Activated T-helper 1 cell treated with anti-CD3 and anti-CD28 coated beads, Interleukin-12 subunit alpha, Interleukin-12 subunit beta, Interleukin-2, Interleukin-4 antibody, amounts not matched to agents 30 ng/mL and 10 ng/mL and 1 ng/mL, durations not matched to agents 14 hours and 24 hours and 36 hours (primary cell): ENCODE measurements at regions of chr9 and their contacts with region 1.

Region 1: GRCh38 chr9:77177161-77177893 is at the start of gene VPS13A:
- DNase-seq: peak; percentile 88
- H3K4me3 Mint-ChIP-seq: peak within 1 kb of the TSS; percentile 95
- H3K27ac Mint-ChIP-seq: peak within 1 kb of the TSS; percentile 92
- H3K4me1 Mint-ChIP-seq: peaks cover 32% of the 10 kb centered on the region
- H3K27me3 Mint-ChIP-seq: peaks cover 13% of the 10 kb centered on the region
- total RNA-seq, gene VPS13A: 43.7 and 44.2 TPM in 2 replicates

Region 2: GRCh38 chr9:76458903-76459690 is 718.2 kb before region 1 on chr9 and contains the start of gene GCNT1:
- intact Hi-C with region 1: loop called (anchors 2 kb)
- DNase-seq: peak; percentile 92
- H3K4me3 Mint-ChIP-seq: peak within 1 kb of the TSS; percentile 87
- H3K27ac Mint-ChIP-seq: peak within 1 kb of the TSS; percentile 91
- H3K4me1 Mint-ChIP-seq: peaks cover 35% of the 10 kb centered on the region
- H3K27me3 Mint-ChIP-seq: peaks cover 3% of the 10 kb centered on the region
- total RNA-seq, gene GCNT1: 11.6 and 13.1 TPM in 2 replicates

Region 3: DNA sequence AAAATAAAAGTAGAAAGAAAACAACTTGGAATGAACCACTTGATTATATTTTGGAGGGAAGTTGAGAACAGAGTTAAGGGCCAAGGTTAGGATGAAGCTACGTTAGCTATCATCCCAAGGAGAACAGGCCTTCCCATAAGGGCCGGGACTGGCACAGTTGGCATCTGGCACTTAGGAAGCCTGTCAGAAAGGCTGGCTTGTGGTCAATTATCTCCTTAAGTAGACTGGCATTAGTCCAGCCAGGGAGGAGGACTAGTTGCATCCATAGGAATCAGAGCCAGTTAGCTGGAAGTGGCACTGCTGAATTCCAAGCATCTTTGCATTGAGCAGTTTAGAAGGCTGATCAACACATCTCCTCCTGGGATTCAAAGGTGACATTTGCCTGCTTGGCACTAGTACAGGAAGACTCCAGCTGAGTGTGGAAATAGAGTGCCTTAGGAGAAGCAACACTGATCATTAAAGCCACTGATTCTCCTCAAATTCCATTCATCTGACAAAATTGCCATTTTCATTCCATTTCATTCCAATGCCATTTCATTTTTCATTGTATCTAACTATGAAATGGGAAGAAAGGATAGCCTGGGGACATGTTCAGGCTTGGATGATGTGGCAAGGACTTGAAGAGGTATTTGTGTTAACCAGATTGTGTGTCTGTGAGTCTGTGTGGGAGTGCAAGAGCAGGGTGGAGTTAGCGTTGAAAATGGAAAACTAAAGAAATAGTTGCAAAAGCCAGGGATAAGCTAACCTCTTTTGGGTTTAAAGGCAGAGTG is 152.4 kb before region 1 on chr9:
- intact Hi-C with region 1: no loop called
- DNase-seq: no peak
- H3K4me3 Mint-ChIP-seq: no peak overlapping the region
- H3K27ac Mint-ChIP-seq: no peak overlapping the region
- H3K4me1 Mint-ChIP-seq: peaks cover 5% of the 10 kb centered on the region
- H3K27me3 Mint-ChIP-seq: peaks cover 37% of the 10 kb centered on the region

Region 4: GRCh38 chr9:77304543-77304942 is 127.2 kb after region 1 on chr9:
- intact Hi-C with region 1: loop called (anchors 10 kb)
- DNase-seq: no peak
- H3K4me3 Mint-ChIP-seq: no peak overlapping the region
- H3K27ac Mint-ChIP-seq: no peak overlapping the region
- H3K4me1 Mint-ChIP-seq: peaks cover 12% of the 10 kb centered on the region
- H3K27me3 Mint-ChIP-seq: no peaks in the 10 kb centered on the region

Region 5: GRCh38 chr9:77841739-77842386 is 664.5 kb after region 1 on chr9:
- intact Hi-C with region 1: loop called (anchors 10 kb)
- DNase-seq: no peak
- H3K4me3 Mint-ChIP-seq: no peak overlapping the region
- H3K27ac Mint-ChIP-seq: peak overlapping the region; percentile 45
- H3K4me1 Mint-ChIP-seq: peaks cover 27% of the 10 kb centered on the region
- H3K27me3 Mint-ChIP-seq: no peaks in the 10 kb centered on the region

Region 6: GRCh38 chr9:78296893-78297671 is 1119.8 kb after region 1 on chr9 and contains the start of gene PSAT1:
- intact Hi-C with region 1: loop called (anchors 1 kb)
- DNase-seq: peak; percentile 92
- H3K4me3 Mint-ChIP-seq: peak within 1 kb of the TSS; percentile 91
- H3K27ac Mint-ChIP-seq: peak within 1 kb of the TSS; percentile 91
- H3K4me1 Mint-ChIP-seq: peaks cover 61% of the 10 kb centered on the region
- H3K27me3 Mint-ChIP-seq: no peaks in the 10 kb centered on the region
- total RNA-seq, gene PSAT1: 85.7 and 91.8 TPM in 2 replicates